ENCODE measurements at regions of chr1 and their contacts with region 1.

Region 1: GRCh38 chr1:212595787-212596714 is 12.5 kb upstream of the ATF3 start:
- DNase-seq: peak; percentile 50
- H3K4me3 Mint-ChIP-seq: peak overlapping the region; percentile 76
- H3K27ac Mint-ChIP-seq: peak overlapping the region; percentile 98
- H3K4me1 Mint-ChIP-seq: peaks cover 26% of the 10 kb centered on the region
- H3K27me3 Mint-ChIP-seq: peaks cover 16% of the 10 kb centered on the region

Region 2: GRCh38 chr1:212566522-212567479 is 29.2 kb before region 1 on chr1:
- CTCF ChIA-PET with region 1: no interaction called
- POLR2A ChIA-PET with region 1: interaction called, 14 read pairs
- DNase-seq: peak; percentile 64
- H3K4me3 Mint-ChIP-seq: peak overlapping the region; percentile 80
- H3K27ac Mint-ChIP-seq: peak overlapping the region; percentile 86
- H3K4me1 Mint-ChIP-seq: peaks cover 24% of the 10 kb centered on the region
- H3K27me3 Mint-ChIP-seq: peaks cover 18% of the 10 kb centered on the region